Panc1 (cell line): ENCODE measurements at regions of chr1 and their contacts with region 1.

Region 1: GRCh38 chr1:90986953-90987352 is 34.9 kb downstream of the ZNF644 start:
- DNase-seq: no peak
- ATAC-seq: no peak
- H3K4me3 ChIP-seq: no peak overlapping the region
- H3K27ac ChIP-seq: no peak overlapping the region
- H3K4me1 ChIP-seq: no peaks in the 10 kb centered on the region
- H3K27me3 ChIP-seq: no peaks in the 10 kb centered on the region
- CTCF ChIP-seq: no peak

Region 2: DNA sequence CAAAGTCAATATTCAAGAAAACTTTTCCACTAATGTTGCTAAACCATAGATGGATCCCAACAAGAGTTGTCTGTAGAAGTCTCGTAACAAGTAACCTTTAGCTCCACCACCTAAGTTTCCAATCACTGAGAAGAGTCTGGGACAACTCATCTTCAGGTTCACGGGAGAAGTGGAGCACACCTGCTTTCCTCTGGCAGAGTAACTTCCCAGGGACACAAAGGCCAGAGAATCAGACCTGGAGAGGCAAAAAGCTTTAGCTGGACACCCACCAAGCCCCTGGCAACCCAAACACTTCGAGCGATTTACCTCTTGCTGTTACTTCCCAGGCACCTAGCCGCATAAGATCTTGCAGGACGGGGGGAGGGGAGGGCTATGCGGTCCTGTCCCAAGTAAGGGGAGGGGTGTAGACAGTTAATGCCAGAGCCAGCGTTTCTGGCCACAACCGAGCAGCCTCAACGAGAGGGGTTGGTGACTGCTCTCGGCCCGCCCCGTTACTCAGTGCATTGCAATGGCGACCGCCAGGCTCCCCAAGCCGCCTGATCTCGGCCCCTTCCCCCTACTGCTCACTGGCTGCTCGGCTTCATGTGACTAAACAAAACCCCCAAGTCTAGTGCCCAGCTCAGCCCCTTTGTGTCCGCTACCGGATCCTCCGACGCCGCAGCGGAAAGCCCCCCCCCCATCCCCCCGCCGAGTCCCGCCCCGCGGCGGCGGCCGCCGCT is 34.2 kb after region 1 on chr1:
- CTCF ChIA-PET with region 1: no interaction called
- POLR2A ChIA-PET with region 1: interaction called, 18 read pairs
- in situ Hi-C with region 1: no loop called
- intact Hi-C with region 1: no loop called
- DNase-seq: no peak
- ATAC-seq: peak; percentile 80
- H3K4me3 ChIP-seq: peak overlapping the region; percentile 63 to 93
- H3K27ac ChIP-seq: peak overlapping the region; percentile 90
- H3K4me1 ChIP-seq: peaks cover 47% of the 10 kb centered on the region
- H3K27me3 ChIP-seq: no peaks in the 10 kb centered on the region
- CTCF ChIP-seq: no peak